MCF 10A (cell line): ENCODE measurements at regions of chr20 and their contacts with region 1.

Region 1: DNA sequence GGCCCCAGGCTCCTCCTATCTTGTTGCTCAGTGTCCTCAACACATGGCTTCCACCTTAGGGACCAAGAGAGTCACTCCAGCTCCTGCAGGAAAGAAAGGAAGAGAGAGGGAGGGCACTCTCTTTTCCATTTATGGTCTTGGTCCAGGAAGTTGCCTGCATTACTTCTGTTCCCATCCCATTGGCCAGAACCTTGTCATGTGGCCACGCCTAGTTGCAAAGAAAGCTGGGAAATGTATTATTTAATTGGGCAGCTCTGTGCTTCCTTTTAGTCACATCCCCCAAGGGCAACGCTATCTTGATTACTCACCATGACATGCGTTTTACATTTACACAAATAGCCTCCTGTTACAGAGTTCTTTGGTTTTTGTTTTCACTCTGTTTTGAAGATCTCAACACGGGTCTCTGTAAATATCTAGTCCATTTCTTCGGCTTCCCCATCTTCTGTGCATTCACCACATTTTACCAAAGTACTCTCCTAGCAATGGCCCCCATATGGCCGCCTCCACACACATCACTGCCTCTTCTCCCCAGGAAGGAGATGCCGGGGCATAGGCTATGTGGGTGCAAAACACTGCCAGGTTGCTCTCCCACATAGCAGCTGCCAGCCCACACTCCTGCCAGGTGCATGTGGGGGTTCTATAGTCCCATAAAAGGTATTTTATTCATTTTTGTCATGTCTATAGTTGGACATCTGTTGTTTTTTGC is 35.7 kb upstream of the ZMYND8 start:
- DNase-seq: peak; percentile 97
- H3K4me3 Mint-ChIP-seq: peak overlapping the region; percentile 67
- H3K27ac Mint-ChIP-seq: peak overlapping the region; percentile 98
- H3K4me1 Mint-ChIP-seq: peaks cover 22% of the 10 kb centered on the region
- H3K27me3 Mint-ChIP-seq: no peaks in the 10 kb centered on the region
- CTCF ChIP-seq: no peak

Region 2: DNA sequence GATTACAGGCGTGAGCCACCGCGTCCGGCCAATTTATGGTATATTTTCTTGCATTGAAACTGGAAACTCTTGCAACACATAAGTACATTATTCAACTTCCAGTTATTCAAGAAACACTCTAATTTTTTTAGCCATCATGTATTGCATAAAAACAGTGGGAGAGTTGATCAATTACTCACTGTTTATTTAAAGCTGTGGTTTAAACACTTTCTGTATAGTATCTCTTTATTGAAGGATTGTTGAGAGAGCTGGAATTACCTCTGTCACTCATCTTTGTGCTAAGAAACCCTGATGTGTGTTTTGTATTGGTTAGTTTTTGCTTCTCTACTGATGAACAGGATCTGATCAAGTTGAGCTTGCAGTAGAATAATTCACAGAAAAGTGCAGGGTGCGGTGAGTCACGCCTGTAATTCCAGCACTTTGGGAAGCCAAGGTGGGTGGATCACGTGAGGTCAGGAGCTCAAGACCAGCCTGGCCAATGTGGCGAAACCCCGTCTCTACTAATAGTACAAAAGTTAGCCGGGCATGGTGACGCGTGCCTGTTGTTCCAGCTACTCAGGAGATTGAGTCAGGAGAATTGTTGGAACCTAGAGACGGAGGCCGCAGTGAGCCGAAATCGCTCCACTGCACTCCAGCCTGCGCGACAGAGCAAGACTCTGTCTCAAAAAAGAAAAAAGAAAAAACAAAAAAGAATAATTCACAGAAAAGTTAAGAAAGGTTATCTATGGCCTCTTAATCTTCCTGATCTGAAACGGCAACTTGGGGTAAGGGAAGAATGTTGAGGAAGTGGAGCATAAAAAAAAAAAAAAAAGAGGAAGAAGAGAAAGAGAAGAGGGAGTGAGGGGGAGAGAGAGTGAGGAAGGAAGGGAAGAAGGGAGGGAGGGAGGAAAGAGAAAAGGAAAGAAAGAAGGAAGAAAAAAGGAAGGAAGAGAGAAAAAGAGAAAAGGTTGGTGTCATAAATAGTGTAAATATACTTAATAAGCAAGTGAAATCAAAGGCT is 40.3 kb after region 1 on chr20:
- CTCF ChIA-PET with region 1: interaction called, 3 read pairs
- POLR2A ChIA-PET with region 1: interaction called, 55 read pairs
- intact Hi-C with region 1: loop called (anchors 1 kb)
- DNase-seq: peak; percentile 94
- H3K4me3 Mint-ChIP-seq: peak overlapping the region; percentile 66
- H3K27ac Mint-ChIP-seq: peak overlapping the region; percentile 99
- H3K4me1 Mint-ChIP-seq: peaks cover 27% of the 10 kb centered on the region
- H3K27me3 Mint-ChIP-seq: no peaks in the 10 kb centered on the region
- CTCF ChIP-seq: no peak

Region 3: DNA sequence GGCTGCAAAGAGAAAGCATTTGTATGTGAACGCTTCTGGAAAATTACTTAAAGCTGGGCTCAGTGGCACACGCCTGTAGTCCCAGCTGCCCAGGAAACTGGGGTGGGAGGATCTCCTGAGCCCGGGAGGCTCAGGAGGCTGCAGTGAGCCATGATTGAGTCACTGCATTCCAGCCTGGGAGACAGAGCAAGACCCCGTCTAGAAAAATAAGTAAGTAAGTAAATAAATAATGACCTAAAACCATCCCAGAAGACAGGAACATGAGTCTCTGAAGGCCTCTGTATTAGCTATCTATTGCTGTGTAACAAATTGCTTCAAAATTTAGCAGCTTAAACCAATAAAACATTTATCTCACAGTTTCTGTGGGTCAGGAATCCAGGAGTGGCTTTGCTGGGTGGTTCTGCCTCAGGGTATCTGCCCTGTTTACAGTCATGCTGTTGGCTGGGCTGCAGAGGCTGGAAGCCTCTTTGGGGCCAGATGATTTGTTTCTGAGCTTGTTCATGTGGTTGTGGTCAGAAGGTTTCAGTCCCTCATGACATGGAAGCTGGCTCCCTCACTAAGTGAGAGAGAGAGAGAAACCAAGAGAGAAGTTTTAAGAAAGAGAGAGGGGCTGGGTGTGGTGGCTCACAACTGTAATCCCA is 61.1 kb after region 1 on chr20:
- CTCF ChIA-PET with region 1: interaction called, 4 read pairs
- POLR2A ChIA-PET with region 1: interaction called, 78 read pairs
- intact Hi-C with region 1: no loop called
- DNase-seq: peak; percentile 92
- H3K4me3 Mint-ChIP-seq: peak overlapping the region; percentile 45
- H3K27ac Mint-ChIP-seq: peak overlapping the region; percentile 91
- H3K4me1 Mint-ChIP-seq: peaks cover 27% of the 10 kb centered on the region
- H3K27me3 Mint-ChIP-seq: no peaks in the 10 kb centered on the region
- CTCF ChIP-seq: no peak

Region 4: DNA sequence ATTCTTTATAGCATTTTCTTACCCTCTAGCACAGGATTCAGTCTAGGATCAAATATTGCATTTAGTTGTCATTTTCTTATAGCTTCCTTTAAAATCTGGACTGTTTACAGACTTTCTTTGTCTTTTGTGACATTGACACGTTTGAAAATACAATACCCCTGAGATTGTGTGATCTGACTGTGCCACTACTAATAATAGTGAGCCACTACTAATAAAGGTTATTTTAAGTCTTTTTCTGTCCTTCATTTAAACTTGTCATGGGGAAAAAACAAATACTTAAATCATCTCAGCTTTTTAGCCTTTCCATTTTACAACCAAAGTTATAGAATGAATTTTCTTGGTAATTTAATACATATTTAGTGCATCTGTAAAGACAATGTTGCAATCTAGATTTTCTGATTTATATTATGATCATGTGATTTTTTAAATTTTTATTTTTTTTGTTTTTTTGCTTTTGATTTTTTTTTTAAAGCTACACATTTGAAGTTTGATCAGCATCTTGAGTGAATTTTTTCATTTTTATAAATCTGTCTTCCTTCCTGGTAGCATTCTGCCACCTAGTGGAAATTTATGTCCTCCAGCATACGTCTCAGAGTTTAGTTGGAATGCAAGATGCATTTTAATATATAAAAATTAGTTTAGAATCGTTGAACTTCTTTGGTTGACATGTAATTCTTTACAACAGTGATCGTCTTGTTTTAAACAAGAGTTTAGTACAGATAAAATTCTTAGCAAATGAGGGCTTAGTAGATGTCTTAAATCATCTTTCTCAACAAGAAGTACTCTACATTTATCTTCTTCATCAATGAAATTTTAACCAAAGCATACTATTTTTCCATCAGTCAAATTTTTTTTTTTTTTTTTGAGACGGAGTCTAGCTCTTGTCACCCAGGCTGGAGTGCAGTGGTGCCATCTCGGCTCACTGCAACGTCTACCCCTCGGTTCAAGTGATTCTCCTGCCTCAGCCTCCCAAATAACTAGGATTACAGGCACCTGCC is 228.9 kb after region 1 on chr20:
- CTCF ChIA-PET with region 1: interaction called, 10 read pairs
- POLR2A ChIA-PET with region 1: interaction called, 3 read pairs
- intact Hi-C with region 1: no loop called
- DNase-seq: peak; percentile 53
- H3K4me3 Mint-ChIP-seq: no peak overlapping the region
- H3K27ac Mint-ChIP-seq: peak overlapping the region; percentile 19
- H3K4me1 Mint-ChIP-seq: peaks cover 12% of the 10 kb centered on the region
- H3K27me3 Mint-ChIP-seq: no peaks in the 10 kb centered on the region
- CTCF ChIP-seq: peak; percentile 72